ENCODE measurements at regions of chr6 and their contacts with region 1.

Region 1: DNA sequence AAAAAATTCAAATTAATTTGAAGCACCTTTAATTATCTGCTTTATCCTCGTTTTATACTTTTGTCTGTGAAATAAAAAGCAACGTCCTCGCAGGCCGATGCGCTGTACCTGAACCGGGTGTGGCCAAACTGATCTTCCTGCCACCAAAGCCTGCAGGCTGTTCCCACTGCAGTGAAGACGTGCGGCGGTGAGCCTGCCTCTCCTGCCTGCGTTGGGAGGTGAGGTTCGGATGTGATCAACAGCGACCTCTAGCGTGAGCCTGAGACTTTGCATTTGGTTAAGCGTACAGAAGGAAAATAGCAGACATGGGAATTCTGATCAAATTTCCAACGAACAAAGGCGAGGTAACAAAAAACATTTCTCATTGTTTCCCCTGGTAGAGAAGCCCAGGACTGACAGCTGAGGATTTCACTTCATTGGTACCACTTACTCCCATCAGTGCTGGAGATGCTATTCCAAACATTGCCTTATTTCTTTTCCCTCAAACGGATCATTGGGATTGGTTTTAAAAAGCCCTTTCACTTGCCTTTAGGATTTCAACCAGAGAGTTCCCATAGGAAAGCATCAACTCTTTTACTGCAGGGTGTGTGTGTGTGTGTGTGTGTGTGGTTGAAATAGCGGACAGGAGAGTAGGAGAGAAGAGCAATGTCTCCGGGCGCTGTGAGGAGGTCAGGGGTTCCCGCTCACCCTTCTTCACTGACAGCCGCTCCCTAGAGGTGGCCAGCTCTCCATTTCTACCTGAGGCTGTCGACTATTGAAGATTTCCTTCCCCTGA is 56.6 kb upstream of the CCN6 start:
- DNase-seq: peak; percentile 60 to 91 (median 74)
- ATAC-seq: peak; percentile 56 to 78 (median 70)
- H3K4me3 ChIP-seq: peak overlapping the region; percentile 7 to 19
- H3K4me3 Mint-ChIP-seq: peak overlapping the region; percentile 55 to 71 (median 63)
- H3K27ac ChIP-seq: peak overlapping the region; percentile 10
- H3K27ac Mint-ChIP-seq: peak overlapping the region; percentile 80 to 87
- H3K4me1 ChIP-seq: peaks cover 37 to 41% of the 10 kb centered on the region in 2 experiments
- H3K4me1 Mint-ChIP-seq: peaks cover 47 to 50% (median 48%) of the 10 kb centered on the region in 3 donors
- H3K27me3 ChIP-seq: no peaks in the 10 kb centered on the region
- H3K27me3 Mint-ChIP-seq: no peaks in the 10 kb centered on the region

Region 2: DNA sequence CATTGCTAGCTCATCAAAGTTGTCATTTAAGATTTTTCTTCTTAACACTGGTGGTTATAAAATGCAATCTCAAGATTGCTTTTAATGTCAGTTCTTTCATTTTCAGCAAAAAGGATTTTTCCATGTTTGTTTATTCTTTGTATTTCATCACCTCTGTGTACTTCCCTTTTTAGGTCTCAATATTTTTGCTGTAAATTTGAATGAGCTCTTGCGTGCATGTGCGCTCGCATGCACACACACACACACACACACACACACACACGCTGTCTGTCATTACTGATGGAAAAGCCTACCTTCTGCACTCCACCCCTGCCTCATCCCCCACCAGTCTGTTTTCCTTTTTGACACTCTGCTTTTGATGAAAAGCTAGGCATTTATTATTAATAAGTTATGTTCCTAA is 38.7 kb before region 1 on chr6:
- CTCF ChIA-PET with region 1: interaction called in 1 of 2 experiments, 3 read pairs
- POLR2A ChIA-PET with region 1: interaction called in 1 of 2 experiments, 11 read pairs
- DNase-seq: no peak
- ATAC-seq: no peak
- H3K4me3 ChIP-seq: no peak overlapping the region
- H3K4me3 Mint-ChIP-seq: no peak overlapping the region
- H3K27ac ChIP-seq: no peak overlapping the region
- H3K27ac Mint-ChIP-seq: no peak overlapping the region
- H3K4me1 ChIP-seq: no peaks in the 10 kb centered on the region
- H3K4me1 Mint-ChIP-seq: peaks cover 0 to 4% (median 0%) of the 10 kb centered on the region in 3 donors
- H3K27me3 ChIP-seq: no peaks in the 10 kb centered on the region
- H3K27me3 Mint-ChIP-seq: no peaks in the 10 kb centered on the region

Measured in T-cell (primary cell).